HepG2 (cell line): ENCODE measurements at regions of chr10 and their contacts with region 1.

Region 1: GRCh38 chr10:98858525-98858924 is 377.1 kb downstream of the HPSE2 start:
- DNase-seq: peak; percentile 3
- ATAC-seq: no peak
- H3K4me3 ChIP-seq: no peak overlapping the region
- H3K27ac ChIP-seq: no peak overlapping the region
- H3K4me1 ChIP-seq: no peaks in the 10 kb centered on the region
- H3K27me3 ChIP-seq: no peaks in the 10 kb centered on the region
- CTCF ChIP-seq: 0 out of 2 replicates have a peak, but pooled peaks have one; percentile 14
- EP300 ChIP-seq: no peak
- POLR2A ChIP-seq: no peak
- RAD21 ChIP-seq: no peak

Region 2: GRCh38 chr10:98694014-98694413 is 164.5 kb before region 1 on chr10:
- CTCF ChIA-PET with region 1: no interaction called
- POLR2A ChIA-PET with region 1: no interaction called
- in situ Hi-C with region 1: no loop called
- intact Hi-C with region 1: no loop called
- DNase-seq: no peak
- ATAC-seq: no peak
- H3K4me3 ChIP-seq: no peak overlapping the region
- H3K27ac ChIP-seq: no peak overlapping the region
- H3K4me1 ChIP-seq: no peaks in the 10 kb centered on the region
- H3K27me3 ChIP-seq: no peaks in the 10 kb centered on the region; a peak in 1 of 5 replicates
- CTCF ChIP-seq: no peak
- EP300 ChIP-seq: no peak
- POLR2A ChIP-seq: no peak
- RAD21 ChIP-seq: no peak

Region 3: DNA sequence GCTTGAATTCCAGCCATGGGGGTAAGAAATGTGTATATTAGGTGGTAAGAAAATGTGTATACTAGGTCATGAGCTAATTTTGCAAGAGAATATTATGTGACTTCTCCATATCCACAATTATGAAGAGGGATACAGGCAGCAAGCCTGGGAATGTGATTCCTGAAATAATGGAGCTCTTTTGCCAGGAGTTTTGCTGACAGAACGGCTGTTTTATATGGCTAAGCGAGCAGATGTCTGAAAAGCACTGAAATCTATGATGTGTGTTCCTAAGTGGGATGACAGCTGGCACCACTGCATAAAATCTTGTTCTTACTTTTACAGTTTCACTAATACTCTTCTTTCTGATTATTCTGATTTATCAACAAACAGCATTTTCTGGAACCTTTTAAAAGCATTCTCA is 25.8 kb before region 1 on chr10:
- CTCF ChIA-PET with region 1: no interaction called
- POLR2A ChIA-PET with region 1: no interaction called
- in situ Hi-C with region 1: no loop called
- intact Hi-C with region 1: no loop called
- DNase-seq: no peak
- ATAC-seq: no peak
- H3K4me3 ChIP-seq: no peak overlapping the region
- H3K27ac ChIP-seq: no peak overlapping the region
- H3K4me1 ChIP-seq: no peaks in the 10 kb centered on the region
- H3K27me3 ChIP-seq: no peaks in the 10 kb centered on the region
- CTCF ChIP-seq: no peak
- EP300 ChIP-seq: no peak
- POLR2A ChIP-seq: no peak
- RAD21 ChIP-seq: no peak

Region 4: DNA sequence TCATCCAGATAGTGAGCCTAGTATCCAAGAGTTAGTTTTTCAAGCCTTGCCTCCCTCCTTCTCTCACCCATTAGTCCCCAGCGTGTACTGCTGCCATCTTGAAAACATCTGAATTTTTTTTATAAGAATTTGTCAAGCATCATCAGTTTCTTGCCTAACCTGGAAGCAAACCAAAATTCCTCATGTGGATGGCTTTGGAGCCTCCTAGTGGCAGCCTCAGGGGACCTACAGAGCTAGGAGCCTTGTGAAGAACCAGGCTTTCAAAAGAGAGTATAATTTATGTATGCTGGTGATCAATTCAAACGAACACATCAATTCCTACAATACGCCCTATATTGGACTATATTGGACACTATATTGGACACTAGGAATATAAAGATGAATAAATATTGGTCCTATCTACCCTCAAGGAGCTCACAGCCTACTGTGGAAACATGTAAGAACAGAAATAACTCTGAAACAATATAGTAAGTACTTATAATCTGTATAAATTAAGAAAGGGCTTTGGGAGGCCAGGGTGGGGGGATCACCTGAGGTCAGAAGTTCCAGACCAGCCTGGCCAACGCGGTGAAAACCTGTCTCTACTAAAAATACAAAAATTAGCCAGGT is 313.7 kb after region 1 on chr10:
- CTCF ChIA-PET with region 1: interaction called, 5 read pairs
- POLR2A ChIA-PET with region 1: no interaction called
- in situ Hi-C with region 1: no loop called
- intact Hi-C with region 1: loop called (anchors 5 kb)
- DNase-seq: peak; percentile 32
- ATAC-seq: peak; percentile 81
- H3K4me3 ChIP-seq: no peak overlapping the region
- H3K27ac ChIP-seq: no peak overlapping the region
- H3K4me1 ChIP-seq: no peaks in the 10 kb centered on the region
- H3K27me3 ChIP-seq: no peaks in the 10 kb centered on the region
- CTCF ChIP-seq: peak; percentile 65
- EP300 ChIP-seq: no peak
- POLR2A ChIP-seq: no peak
- RAD21 ChIP-seq: no peak

Region 5: DNA sequence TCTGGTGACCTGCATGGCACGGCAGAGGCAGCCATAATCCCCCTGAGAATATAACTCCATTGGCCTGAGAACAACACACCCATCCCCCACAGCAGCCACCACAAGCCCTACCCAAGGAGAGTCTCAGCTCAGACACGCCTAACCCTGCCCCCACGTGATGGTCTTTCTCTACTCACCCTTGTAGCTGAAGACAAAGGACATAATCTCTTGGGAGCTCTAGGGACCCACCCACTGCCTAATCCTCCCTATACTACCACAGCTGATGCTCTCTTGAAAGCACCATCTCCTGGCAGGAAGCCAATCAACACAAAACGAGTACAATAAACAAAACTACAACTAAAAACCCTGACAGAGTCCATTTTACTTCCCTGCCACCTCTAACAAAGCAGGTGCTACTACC is 407.9 kb after region 1 on chr10:
- CTCF ChIA-PET with region 1: no interaction called
- POLR2A ChIA-PET with region 1: no interaction called
- in situ Hi-C with region 1: loop called (anchors 25 kb)
- intact Hi-C with region 1: no loop called
- DNase-seq: no peak
- ATAC-seq: no peak
- H3K4me3 ChIP-seq: no peak overlapping the region
- H3K27ac ChIP-seq: no peak overlapping the region
- H3K4me1 ChIP-seq: no peaks in the 10 kb centered on the region
- H3K27me3 ChIP-seq: 0 out of 5 replicates have a peak, but pooled peaks cover 0 to 7% of the 10 kb centered on the region in 2 experiments
- CTCF ChIP-seq: no peak
- EP300 ChIP-seq: no peak
- POLR2A ChIP-seq: no peak
- RAD21 ChIP-seq: no peak